Head of caudate nucleus (tissue), 42 donors: ENCODE measurements at regions of chr20 and their contacts with region 1.

Region 1: DNA sequence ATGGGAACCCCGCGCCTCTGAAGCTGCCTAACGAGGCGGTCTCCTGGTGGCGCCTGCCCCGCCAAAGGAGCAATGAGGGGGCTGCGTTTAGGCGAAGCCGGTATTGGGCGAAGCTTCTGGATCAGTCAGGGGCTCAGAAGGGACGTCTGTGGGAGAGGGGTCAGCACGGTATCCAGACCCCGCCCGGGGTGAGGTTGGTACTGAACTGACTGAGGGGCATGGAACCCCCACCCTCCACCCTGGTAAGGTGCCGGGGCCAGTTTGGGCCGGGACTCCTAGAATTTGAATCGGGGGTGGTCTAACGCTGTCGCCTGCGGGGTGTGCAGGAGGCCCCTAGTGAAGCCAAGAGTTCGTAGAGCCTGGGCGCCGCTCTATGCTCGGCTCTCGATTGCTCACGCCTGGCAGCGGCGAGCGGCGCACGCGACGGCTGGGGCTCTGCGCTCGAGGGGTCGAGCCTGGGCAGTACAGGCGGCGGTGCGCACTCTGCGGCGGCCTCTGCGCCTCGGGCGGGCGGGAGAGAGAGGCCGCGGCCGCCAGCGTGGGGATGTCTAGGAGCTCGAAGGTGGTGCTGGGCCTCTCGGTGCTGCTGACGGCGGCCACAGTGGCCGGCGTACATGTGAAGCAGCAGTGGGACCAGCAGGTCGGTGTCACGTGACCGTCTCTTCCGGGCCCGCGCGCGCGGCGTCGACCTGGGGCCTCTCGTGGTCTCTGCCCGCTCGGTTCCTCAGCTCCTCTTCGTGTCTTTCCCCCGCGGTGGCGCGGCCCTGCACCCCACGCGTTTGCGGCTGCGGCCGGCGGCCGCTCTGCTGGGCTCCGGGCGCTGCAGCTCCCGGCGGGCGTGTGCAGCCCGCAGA is at the starts of genes KAT14 and PET117:
- DNase-seq: peak; percentile 68 to 96 (median 92)

Region 2: DNA sequence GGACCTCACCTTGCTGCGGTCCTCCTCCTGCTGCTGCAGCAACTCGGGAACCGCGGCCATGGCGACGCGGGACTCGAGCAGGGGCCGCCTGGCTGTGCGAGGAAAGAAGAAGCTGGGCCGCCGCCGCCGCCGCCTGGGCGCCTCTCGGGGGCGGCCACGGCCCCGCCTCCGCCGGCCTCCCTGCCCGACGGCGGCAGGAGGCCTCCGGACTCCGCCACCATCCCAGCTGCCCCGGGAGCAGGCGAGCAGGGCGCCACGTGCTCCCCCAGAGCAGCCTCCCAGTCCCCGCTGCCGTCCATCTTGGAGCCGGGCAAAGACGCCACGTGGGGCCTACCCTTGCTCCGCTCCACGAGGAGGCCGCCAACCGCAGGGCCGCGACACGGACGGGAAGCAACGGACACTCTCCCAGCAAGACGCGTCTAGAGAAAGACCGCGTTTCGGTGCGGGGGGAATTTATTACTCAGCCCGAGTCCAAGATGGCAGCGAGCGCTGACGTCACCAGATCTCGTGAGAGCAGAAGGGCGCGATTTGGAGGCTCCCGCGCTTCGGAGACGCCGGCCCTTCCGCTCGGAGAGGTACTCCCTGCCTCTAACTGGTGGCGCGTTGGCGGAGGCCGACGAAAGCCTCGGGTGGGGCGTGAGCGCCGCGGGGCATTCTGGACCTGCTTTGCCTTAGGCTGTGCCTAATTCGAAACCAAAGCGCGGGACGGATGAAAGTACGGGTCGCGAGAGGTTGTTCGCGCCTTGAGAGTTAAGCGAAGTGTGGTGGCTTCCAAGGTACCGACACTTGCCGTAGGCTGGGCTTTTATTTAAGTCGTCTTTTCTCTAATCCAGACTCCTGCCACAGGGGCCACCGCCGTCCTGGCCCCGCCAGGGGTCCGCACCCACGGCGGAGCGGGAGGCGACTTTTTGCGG is 169.0 kb before region 1 on chr20 and contains the starts of genes MGME1 and SNX5:
- intact Hi-C with region 1: loop called (anchors 5 kb)
- DNase-seq: peak; percentile 97 to 100 (median 99)